Right cardiac atrium (tissue), 5 donors: ENCODE measurements at regions of chr14 and their contacts with region 1.

Region 1: DNA sequence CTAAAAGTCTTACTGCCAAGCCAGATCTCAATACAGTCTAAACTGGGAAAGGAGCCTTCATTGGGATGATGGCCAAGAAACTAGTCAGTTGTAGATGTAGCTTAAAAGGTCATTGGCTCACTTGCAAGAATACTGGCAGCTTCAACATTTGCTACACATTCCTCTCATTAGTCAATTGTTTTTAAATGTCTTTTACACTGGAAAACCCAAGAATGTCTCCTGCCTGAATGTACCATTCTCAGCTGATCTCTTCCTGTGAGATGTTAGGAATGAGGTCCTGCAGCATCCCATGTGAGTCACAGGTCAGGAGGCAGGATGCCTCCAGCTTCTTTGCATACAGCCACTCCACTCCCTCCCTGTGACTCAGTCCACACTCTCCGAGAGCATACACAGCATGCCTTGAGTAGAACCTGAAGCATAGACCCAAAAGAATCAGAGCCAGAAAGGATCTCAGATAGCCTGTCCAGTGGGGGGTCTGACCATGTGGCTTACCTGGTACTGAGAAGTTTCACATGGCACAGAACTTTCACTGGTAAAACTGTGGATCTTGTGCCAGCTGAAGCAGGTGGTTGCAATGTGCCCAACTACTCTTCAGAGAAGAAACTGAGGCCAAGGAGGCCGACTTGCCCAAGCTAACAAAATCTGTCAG is 56.0 kb upstream of the HECTD1 start:
- DNase-seq: peak in 1 of 3 donors; percentile 62
- ATAC-seq: peak; percentile 88 to 95
- H3K4me3 ChIP-seq: no peak overlapping the region
- H3K27ac ChIP-seq: peak overlapping the region; percentile 14
- H3K4me1 ChIP-seq: peaks cover 6% of the 10 kb centered on the region
- H3K27me3 ChIP-seq: no peaks in the 10 kb centered on the region

Region 2: GRCh38 chr14:31159682-31160296 is 103.8 kb before region 1 on chr14:
- intact Hi-C with region 1: no loop called
- DNase-seq: no peak
- ATAC-seq: no peak
- H3K4me3 ChIP-seq: no peak overlapping the region
- H3K27ac ChIP-seq: no peak overlapping the region
- H3K4me1 ChIP-seq: no peaks in the 10 kb centered on the region
- H3K27me3 ChIP-seq: no peaks in the 10 kb centered on the region

Region 3: DNA sequence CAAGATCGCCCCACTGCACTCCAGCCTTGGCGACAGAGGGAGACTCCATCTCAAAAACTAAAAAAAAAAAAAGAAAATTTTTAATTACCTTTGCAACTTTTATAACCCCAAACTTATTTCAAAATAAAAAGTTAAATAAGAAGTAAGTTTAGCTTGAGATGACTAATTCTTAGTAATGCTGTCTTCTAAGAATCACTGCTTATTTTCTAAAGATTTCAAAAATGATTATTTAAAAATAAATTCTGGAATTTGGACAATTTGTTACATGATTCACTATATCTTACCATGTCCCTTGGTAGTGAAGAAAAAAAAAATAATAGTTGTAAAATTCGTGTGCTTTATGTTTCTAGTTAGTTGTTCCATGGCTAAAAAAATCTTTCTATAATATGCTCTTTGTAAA is 44.4 kb before region 1 on chr14:
- intact Hi-C with region 1: loop called in 1 of 4 experiments (anchors 10 kb)
- DNase-seq: no peak
- ATAC-seq: no peak
- H3K4me3 ChIP-seq: no peak overlapping the region
- H3K27ac ChIP-seq: no peak overlapping the region
- H3K4me1 ChIP-seq: no peaks in the 10 kb centered on the region
- H3K27me3 ChIP-seq: no peaks in the 10 kb centered on the region

Region 4: GRCh38 chr14:31543969-31544799 is 280.6 kb after region 1 on chr14:
- intact Hi-C with region 1: no loop called
- DNase-seq: no peak
- ATAC-seq: peak in 1 of 2 donors; percentile 42
- H3K4me3 ChIP-seq: no peak overlapping the region
- H3K27ac ChIP-seq: no peak overlapping the region
- H3K4me1 ChIP-seq: no peaks in the 10 kb centered on the region
- H3K27me3 ChIP-seq: no peaks in the 10 kb centered on the region